Heart right ventricle (tissue), 16 donors: ENCODE measurements at regions of chr1 and their contacts with region 1.

Region 1: DNA sequence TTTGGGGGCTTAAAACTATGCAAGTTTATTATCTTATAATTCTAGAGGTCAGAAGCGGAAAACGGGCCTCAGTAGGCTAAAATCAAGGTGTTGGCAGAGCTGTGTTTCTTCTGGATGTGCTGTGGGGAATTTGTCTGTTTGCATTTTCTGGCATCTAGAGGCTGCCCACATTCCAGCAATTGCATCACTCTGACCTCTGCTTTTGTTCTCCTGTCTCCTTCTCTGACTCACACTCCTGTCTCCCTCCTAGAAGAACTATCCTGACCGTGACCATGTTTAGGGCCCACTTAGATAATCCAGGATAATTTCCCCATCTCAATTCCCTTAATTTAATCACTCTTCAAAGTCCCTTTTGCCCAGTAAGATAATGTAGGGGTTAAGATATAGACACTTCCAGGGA is 127.4 kb upstream of the DEPDC1 start:
- DNase-seq: no peak
- ATAC-seq: peak in 7 of 8 donors; percentile 55 to 90 (median 81)
- H3K4me3 ChIP-seq: no peak overlapping the region
- H3K27ac ChIP-seq: peak overlapping the region in 9 of 10 donors; percentile 10 to 72 (median 54)
- H3K4me1 ChIP-seq: peaks cover 0 to 11% (median 0%) of the 10 kb centered on the region in 9 donors
- H3K27me3 ChIP-seq: no peaks in the 10 kb centered on the region
- CTCF ChIP-seq: no peak

Region 2: GRCh38 chr1:68528243-68528642 is 96.0 kb before region 1 on chr1:
- intact Hi-C with region 1: no loop called
- DNase-seq: no peak
- ATAC-seq: no peak
- H3K4me3 ChIP-seq: no peak overlapping the region
- H3K27ac ChIP-seq: no peak overlapping the region
- H3K4me1 ChIP-seq: no peaks in the 10 kb centered on the region
- H3K27me3 ChIP-seq: no peaks in the 10 kb centered on the region
- CTCF ChIP-seq: no peak

Region 3: DNA sequence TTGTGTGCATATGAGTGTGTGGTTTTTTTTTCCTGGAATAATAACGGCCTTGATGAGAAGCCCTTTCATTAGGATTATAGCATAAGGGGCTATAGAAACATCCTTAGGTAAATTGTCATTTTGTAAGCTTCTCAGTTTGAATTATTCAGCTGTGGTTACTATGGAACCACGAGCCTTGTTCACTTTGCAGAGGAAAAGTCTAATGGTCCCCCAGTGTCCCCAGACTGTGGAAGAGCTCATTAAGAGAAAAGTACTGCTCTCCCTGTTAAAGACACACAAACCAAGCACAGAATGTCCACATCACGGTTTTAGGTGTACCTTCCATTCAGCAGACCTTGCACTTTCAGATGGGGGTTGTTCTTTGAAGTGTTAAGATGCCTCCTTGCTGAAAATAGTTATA is 72.0 kb after region 1 on chr1:
- intact Hi-C with region 1: no loop called
- DNase-seq: no peak
- ATAC-seq: no peak
- H3K4me3 ChIP-seq: no peak overlapping the region
- H3K27ac ChIP-seq: no peak overlapping the region
- H3K4me1 ChIP-seq: no peaks in the 10 kb centered on the region
- H3K27me3 ChIP-seq: no peaks in the 10 kb centered on the region
- CTCF ChIP-seq: no peak

Region 4: DNA sequence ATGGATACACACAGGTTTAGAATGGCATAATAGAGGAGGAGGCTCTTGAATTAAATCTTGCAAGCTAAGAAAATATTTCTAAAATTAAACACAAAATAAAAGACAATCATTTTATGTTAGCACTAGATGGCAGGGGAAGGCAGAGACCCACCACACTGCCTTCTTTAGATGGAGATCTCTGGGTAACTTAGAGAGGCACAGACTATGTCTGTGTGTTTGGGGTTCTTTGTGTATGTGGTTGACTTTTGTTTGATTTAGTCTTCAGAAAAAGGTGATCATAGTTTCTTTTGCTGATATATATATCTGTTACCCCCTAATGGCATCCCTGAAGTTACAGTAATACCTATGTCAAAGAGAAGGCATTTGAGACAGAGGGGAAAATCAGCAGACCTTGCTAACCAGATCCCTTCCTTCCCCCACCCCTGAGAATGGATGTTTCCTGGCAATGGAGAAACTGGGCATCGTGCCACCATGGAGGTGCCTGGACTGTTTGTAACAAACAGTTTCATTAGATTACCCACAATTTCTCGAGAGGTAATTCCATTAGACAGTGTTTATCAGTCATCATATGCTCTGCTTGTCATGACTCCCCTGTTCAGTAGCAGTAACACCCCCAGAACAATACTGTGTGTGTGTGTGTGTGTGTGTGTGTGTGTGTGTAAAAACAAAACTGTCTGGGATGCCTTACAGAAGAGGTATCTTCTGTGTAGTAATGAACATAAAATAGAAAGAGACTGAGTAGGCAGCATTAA is 100.9 kb after region 1 on chr1:
- intact Hi-C with region 1: loop called in 4 of 10 experiments (anchors 2 to 10 kb)
- DNase-seq: peak; percentile 59 to 84
- ATAC-seq: peak; percentile 65 to 99 (median 96)
- H3K4me3 ChIP-seq: no peak overlapping the region
- H3K27ac ChIP-seq: peak overlapping the region in 5 of 10 donors; percentile 35 to 65 (median 46)
- H3K4me1 ChIP-seq: peaks cover 0 to 15% (median 0%) of the 10 kb centered on the region in 9 donors
- H3K27me3 ChIP-seq: no peaks in the 10 kb centered on the region
- CTCF ChIP-seq: no peak

Region 5: DNA sequence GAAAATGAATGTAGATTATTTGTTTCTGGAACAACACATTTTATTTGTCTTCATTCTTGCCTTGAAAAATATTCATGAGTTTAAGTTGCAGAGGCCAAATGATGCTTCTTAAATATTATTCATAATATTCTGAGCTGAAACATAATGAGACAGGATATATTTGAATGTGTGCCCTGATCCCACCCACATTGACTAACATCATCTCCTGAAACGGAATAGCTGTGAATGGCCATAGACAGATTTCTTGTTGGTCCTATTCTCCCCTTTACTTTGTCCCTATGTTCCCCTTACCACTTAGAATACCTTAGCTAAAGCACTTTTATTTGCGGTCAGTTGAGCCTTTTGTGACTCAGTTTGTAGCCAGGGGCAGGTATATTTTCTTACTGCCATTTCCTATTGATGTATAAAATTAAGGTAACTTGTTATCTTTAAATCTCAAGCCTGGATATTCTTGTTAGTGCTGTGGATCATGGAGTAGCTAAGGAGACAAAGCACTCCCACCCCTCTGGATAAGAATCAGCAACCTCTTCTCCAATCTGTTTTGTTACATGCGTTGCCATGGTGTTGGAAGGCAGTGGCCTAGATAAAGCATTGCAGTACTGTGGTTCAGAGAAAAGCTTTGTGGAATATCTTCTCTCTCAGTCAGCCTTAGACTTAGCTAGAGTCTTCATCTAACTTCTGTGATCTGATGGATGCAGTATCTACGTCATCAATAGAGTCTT is 351.1 kb after region 1 on chr1:
- intact Hi-C with region 1: no loop called
- DNase-seq: no peak
- ATAC-seq: peak in 1 of 8 donors; percentile 63
- H3K4me3 ChIP-seq: no peak overlapping the region
- H3K27ac ChIP-seq: no peak overlapping the region
- H3K4me1 ChIP-seq: no peaks in the 10 kb centered on the region
- H3K27me3 ChIP-seq: no peaks in the 10 kb centered on the region
- CTCF ChIP-seq: no peak